ENCODE measurements at regions of chr7 and their contacts with region 1.

Region 1: DNA sequence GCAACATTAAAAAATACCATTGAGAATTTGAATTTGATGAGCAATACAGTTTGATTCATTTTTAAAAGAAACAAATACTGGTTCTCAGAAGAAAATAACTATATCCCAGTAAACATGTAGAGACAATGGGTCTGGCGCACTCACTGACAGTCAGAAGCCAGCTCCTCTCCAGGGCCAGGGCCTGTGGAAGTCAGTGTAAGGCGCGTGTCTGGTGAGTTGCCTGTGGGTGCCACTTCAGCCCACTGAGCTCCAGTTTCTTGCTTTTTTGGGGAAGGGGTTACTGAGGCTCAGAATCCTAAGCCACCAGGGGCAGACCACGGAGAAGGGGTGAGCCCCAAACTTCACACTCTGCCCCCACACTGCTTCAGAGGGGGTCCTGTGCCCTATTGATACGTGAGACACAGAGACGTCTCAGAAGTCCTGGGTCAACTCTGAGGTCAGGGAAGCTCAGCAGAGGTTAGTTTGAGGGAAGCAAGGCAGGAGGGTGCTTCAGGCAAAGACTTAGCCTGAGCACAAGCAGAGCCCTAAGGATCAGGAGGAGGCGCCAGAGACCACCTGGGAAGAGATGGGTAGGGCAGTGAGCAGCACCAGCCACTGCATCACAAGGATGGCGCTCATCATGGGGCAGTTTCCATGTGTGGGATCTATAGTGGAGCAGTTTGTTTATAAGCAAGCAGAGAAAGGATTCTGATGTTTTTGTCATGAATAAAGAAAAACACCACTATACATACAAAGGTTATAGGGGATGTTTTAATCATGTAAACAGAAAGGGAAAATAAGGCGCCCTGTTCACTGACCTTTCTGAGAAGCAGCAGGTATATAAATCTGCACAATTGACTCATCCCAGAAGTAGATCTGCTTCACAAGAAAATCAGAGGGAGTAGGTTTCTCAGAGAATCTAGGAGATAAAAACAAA is 95.7 kb downstream of the PKD1L1 start:
- DNase-seq: no peak
- ATAC-seq: no peak
- H3K4me3 ChIP-seq: no peak overlapping the region
- H3K4me3 Mint-ChIP-seq: no peak overlapping the region
- H3K27ac ChIP-seq: no peak overlapping the region
- H3K27ac Mint-ChIP-seq: no peak overlapping the region
- H3K4me1 ChIP-seq: no peaks in the 10 kb centered on the region
- H3K4me1 Mint-ChIP-seq: no peaks in the 10 kb centered on the region
- H3K27me3 ChIP-seq: no peaks in the 10 kb centered on the region
- H3K27me3 Mint-ChIP-seq: no peaks in the 10 kb centered on the region

Region 2: DNA sequence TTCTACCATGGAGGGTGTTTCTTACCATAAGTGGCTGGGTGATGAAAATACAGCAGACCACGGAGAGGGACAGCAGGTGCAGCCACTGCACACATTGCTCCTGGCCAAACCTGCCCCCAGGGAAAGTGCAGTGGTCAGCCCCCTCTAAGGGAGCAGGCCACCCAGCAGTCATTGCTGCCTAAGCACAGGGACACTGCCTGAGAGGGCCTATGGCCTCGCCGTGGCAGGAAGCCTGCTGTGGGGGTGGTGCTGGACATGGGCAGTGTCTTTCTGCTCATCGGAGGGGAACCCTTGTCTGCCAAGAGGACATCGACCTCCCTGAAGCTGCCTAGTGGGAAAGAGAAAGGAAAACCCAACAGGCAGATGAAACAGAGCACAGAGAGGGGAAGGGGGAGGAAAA is 22.6 kb before region 1 on chr7:
- CTCF ChIA-PET with region 1: no interaction called
- POLR2A ChIA-PET with region 1: interaction called in 1 of 2 experiments, 10 read pairs
- DNase-seq: no peak
- ATAC-seq: no peak
- H3K4me3 ChIP-seq: no peak overlapping the region
- H3K4me3 Mint-ChIP-seq: no peak overlapping the region
- H3K27ac ChIP-seq: no peak overlapping the region
- H3K27ac Mint-ChIP-seq: no peak overlapping the region
- H3K4me1 ChIP-seq: no peaks in the 10 kb centered on the region
- H3K4me1 Mint-ChIP-seq: no peaks in the 10 kb centered on the region
- H3K27me3 ChIP-seq: peaks cover 0 to 13% of the 10 kb centered on the region in 2 experiments
- H3K27me3 Mint-ChIP-seq: peaks cover 3 to 4% of the 10 kb centered on the region in 2 donors

Measured in T-cell (primary cell).